Sciatic nerve (tissue), 2 donors: ENCODE measurements at regions of chr5 and their contacts with region 1.

Region 1: DNA sequence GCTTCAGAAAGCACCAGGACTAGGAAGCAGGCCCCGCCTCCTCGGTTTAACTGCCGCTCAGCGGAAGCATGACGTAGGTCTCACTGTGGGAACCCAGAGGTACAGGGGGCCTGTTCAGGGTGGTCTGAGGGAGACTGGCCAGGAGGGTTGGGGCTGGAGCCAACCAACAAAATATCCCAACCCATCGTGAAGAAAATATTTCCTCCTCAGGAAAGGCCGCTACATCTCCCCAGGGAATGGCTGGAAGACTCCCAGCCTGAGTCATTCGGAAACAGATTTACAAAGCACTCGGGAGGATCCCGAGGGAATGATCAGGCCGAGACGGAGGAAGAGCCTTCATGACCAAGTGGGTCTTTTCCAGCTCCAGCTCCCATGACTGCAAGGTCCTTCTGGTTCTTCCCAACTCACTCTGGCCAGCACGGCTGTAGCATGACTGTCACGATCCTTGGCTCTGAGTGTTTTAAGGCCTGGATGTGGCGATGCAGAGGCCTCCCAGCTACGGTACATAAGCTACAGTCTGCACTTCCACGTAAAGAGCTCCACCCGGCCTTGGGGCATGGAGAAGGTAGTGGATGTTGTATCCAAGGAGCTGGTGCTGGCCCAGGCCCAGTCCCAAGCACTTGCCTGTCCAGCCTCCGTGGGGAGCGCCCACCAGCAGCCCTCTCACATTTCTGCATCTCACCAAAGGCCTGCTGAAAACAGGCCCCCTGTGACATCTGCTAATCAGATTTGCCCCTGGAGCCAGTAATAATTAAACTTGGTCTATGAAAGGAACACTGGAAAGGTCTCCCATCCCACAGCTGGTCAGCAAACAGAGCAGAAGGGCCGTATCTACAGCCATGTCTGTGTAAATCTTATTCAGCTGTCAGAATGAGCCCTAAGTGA is 100.6 kb downstream of the LHFPL2 start:
- DNase-seq: peak; percentile 92
- ATAC-seq: peak; percentile 89

Region 2: GRCh38 chr5:77798456-77798855 is 749.5 kb before region 1 on chr5:
- intact Hi-C with region 1: no loop called
- DNase-seq: no peak
- ATAC-seq: no peak

Region 3: GRCh38 chr5:78964887-78965286 is 416.9 kb after region 1 on chr5:
- intact Hi-C with region 1: loop called (anchors 10 kb)
- DNase-seq: no peak
- ATAC-seq: peak; percentile 88